B cell (primary cell): ENCODE measurements at regions of chr14 and their contacts with region 1.

Region 1: GRCh38 chr14:106044949-106045600 is 518.7 kb downstream of the TMEM121 start:
- DNase-seq: peak; percentile 77
- ATAC-seq: peak; percentile 95
- H3K4me3 ChIP-seq: no peak overlapping the region
- H3K4me3 Mint-ChIP-seq: peak overlapping the region; percentile 45
- H3K27ac ChIP-seq: no peak overlapping the region
- H3K27ac Mint-ChIP-seq: peak overlapping the region; percentile 61
- H3K4me1 ChIP-seq: peaks cover 9 to 13% of the 10 kb centered on the region in 2 donors
- H3K4me1 Mint-ChIP-seq: peaks cover 12% of the 10 kb centered on the region
- H3K27me3 ChIP-seq: no peaks in the 10 kb centered on the region
- H3K27me3 Mint-ChIP-seq: peaks cover 5% of the 10 kb centered on the region
- CTCF ChIP-seq: peak; percentile 62

Region 2: DNA sequence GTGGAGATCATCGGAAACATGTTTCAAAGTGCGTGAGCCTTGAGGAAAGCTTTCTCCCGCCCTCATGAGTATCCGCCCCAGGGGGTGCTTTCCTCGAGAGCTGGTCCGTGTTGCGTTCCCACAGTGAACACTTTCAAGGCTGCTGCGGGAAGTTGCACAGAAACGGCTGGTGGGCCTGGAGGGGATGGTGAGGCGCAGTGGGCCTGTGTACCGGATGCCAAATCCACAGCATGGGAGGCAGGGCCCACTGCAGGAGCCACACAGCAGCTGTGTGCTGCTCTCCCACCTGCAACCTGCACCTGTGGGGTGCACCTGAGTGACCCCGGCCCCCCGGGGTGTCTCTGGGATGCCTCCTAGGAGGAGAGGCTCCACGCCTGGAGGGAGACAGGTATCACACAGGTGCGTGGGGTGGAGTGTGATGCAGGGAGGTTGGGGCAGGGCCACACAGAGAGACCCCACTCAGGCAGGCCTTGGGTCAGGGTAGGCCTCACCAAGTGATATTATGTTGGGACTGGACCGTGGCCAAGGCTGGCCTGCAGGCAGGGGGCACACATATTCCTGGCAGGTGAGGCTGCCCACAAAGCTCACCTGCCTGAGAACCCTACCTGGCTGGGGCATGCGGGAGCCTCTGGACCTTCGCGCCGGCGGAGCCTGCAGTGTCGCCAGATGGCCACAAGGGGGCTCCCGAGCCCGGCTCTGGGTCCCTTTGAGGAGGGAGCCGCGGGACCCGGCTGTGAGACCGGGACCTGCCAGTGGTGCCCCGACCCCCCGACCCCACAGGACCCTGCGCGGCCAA is 507.5 kb before region 1 on chr14:
- CTCF ChIA-PET with region 1: no interaction called
- POLR2A ChIA-PET with region 1: no interaction called
- intact Hi-C with region 1: loop called (anchors 5 kb)
- DNase-seq: peak; percentile 82
- ATAC-seq: peak; percentile 93
- H3K4me3 ChIP-seq: no peak overlapping the region
- H3K4me3 Mint-ChIP-seq: no peak overlapping the region
- H3K27ac ChIP-seq: no peak overlapping the region
- H3K27ac Mint-ChIP-seq: no peak overlapping the region
- H3K4me1 ChIP-seq: peaks cover 13 to 18% of the 10 kb centered on the region in 2 donors
- H3K4me1 Mint-ChIP-seq: peaks cover 17% of the 10 kb centered on the region
- H3K27me3 ChIP-seq: peaks cover 0 to 5% (median 0%) of the 10 kb centered on the region in 4 experiments
- H3K27me3 Mint-ChIP-seq: no peaks in the 10 kb centered on the region
- CTCF ChIP-seq: peak; percentile 98